ENCODE measurements at regions of chr9 and their contacts with region 1.

Region 1: DNA sequence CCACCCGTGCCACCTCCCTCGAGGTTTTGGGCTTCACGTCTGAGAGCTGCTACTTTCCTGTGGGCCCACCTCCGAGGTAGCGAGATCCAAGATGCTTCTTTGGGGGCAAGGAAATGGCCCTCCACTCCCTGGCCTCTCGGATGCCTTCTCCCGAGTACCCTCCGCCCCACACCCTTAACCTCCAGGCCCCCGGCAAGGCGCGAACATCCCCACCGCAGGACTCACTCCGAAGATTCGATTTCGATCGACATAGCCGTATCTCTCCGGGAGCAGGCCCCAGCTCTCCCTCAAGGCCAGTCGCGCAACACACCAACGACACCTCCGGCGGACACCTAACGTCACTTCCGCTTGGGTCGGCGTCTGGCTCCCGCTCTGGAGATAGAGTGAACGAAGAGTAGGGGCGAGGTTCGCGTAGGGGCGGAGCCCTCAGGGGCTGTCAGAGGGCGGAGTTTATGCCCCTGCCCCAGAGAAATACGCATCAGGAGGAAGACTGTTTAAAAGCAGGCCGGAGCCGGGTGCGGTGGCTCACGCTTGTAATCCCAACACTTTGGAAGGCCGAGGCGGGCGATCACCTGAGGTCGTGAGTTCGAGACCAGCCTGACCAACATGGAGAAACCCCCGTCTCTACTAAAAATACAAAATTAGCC is at the start of gene SMU1:
- DNase-seq: peak; percentile 94 to 98 (median 96)
- H3K4me3 ChIP-seq: peak within 1 kb of the TSS; percentile 79 to 92
- H3K4me3 Mint-ChIP-seq: peak within 1 kb of the TSS; percentile 94 to 100 (median 99)
- H3K27ac ChIP-seq: peak within 1 kb of the TSS; percentile 94
- H3K27ac Mint-ChIP-seq: peak within 1 kb of the TSS; percentile 99 to 100 (median 100)
- H3K4me1 ChIP-seq: peaks cover 47% of the 10 kb centered on the region
- H3K4me1 Mint-ChIP-seq: peaks cover 17 to 51% (median 34%) of the 10 kb centered on the region in 4 donors
- H3K27me3 ChIP-seq: no peaks in the 10 kb centered on the region
- H3K27me3 Mint-ChIP-seq: no peaks in the 10 kb centered on the region
- total RNA-seq, gene SMU1: 30.9 to 31.6 TPM

Region 2: DNA sequence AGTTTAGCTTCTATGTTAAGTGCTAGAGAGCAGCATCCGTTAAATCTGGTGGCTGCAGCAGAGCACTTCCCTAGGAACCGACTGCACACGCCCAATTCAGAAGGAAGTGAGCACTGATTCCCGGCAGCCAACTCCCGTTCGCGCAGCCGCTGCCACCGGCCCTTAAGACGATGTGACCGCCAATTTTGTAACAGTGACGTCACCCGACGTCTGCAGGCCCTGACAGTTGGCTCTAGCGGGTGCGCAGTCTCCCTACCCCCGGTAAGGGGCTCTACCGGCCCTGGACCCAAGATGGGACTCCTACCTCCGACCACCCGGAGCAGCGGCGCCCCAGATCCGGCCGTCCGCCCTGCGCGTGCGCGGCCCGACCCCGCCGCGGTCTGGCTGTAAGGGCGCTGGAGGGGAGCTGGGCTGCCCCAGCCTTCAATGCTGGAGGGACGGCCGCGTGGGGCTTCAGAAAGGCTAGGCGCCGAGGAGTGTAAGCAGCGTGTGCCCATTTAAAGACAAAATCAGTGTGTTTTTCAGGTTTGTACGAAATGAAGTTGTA is 32.3 kb before region 1 on chr9:
- CTCF ChIA-PET with region 1: no interaction called
- POLR2A ChIA-PET with region 1: no interaction called
- intact Hi-C with region 1: loop called (anchors 5 kb)
- DNase-seq: peak; percentile 58 to 83 (median 60)
- H3K4me3 ChIP-seq: peak overlapping the region; percentile 37 to 58
- H3K4me3 Mint-ChIP-seq: peak overlapping the region; percentile 75 to 89 (median 84)
- H3K27ac ChIP-seq: peak overlapping the region; percentile 58
- H3K27ac Mint-ChIP-seq: peak overlapping the region; percentile 54 to 92 (median 85)
- H3K4me1 ChIP-seq: peaks cover 8% of the 10 kb centered on the region
- H3K4me1 Mint-ChIP-seq: peaks cover 10 to 19% (median 13%) of the 10 kb centered on the region in 4 donors
- H3K27me3 ChIP-seq: no peaks in the 10 kb centered on the region
- H3K27me3 Mint-ChIP-seq: no peaks in the 10 kb centered on the region

Region 3: GRCh38 chr9:33178971-33179697 is 102.7 kb after region 1 on chr9:
- CTCF ChIA-PET with region 1: interaction called, 5 read pairs
- POLR2A ChIA-PET with region 1: interaction called, 3 read pairs
- intact Hi-C with region 1: loop called (anchors 1 kb)
- DNase-seq: no peak
- H3K4me3 ChIP-seq: no peak overlapping the region
- H3K4me3 Mint-ChIP-seq: no peak overlapping the region
- H3K27ac ChIP-seq: no peak overlapping the region
- H3K27ac Mint-ChIP-seq: no peak overlapping the region
- H3K4me1 ChIP-seq: no peaks in the 10 kb centered on the region
- H3K4me1 Mint-ChIP-seq: peaks cover 0 to 2% (median under 1%) of the 10 kb centered on the region in 4 donors
- H3K27me3 ChIP-seq: no peaks in the 10 kb centered on the region
- H3K27me3 Mint-ChIP-seq: peaks cover 4 to 6% of the 10 kb centered on the region in 2 donors

Region 4: DNA sequence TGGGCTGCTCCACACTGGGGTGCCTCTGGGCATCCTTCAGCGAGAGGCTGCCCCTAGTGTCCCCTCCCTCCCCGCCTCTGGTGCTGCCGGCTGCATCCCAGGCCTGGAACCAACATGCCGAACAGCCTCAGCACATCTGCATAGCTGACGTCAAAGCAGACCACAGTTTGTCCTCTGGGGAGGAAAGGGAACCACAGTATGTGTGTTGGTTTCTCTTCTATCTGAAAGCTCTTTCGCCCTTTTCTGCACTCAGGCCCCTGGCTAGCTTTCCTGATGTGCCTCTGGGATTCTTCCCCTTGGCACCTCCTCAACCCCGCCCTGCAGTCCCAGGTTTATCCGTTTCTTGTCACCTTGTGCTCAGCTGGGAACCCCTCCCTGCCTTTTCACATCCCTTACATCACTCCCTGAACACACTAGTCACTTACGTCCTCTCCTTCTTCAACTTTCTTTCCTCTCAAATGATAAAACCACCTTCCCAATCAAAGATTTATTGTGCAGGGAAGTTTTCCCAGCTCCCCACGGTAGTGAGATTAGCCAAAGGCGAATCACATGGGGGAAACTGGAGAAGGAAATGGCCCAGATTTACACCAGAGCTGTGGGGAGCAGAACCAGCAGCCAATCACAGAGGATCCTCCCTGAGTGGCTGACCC is 126.2 kb after region 1 on chr9:
- CTCF ChIA-PET with region 1: no interaction called
- POLR2A ChIA-PET with region 1: no interaction called
- intact Hi-C with region 1: no loop called
- DNase-seq: peak in 4 of 5 donors; percentile 27 to 58 (median 36)
- H3K4me3 ChIP-seq: no peak overlapping the region
- H3K4me3 Mint-ChIP-seq: peak overlapping the region in 3 of 8 donors; percentile 27 to 57 (median 27)
- H3K27ac ChIP-seq: no peak overlapping the region
- H3K27ac Mint-ChIP-seq: peak overlapping the region in 4 of 7 donors; percentile 39 to 75 (median 64)
- H3K4me1 ChIP-seq: no peaks in the 10 kb centered on the region
- H3K4me1 Mint-ChIP-seq: peaks cover 4 to 13% (median 5%) of the 10 kb centered on the region in 4 donors
- H3K27me3 ChIP-seq: no peaks in the 10 kb centered on the region
- H3K27me3 Mint-ChIP-seq: peaks cover 0 to 3% of the 10 kb centered on the region in 2 donors

Region 5: GRCh38 chr9:33225319-33226149 is 149.1 kb after region 1 on chr9:
- CTCF ChIA-PET with region 1: interaction called, 28 read pairs
- POLR2A ChIA-PET with region 1: interaction called, 4 read pairs
- intact Hi-C with region 1: loop called (anchors 1 kb)
- DNase-seq: peak; percentile 63 to 74 (median 69)
- H3K4me3 ChIP-seq: no peak overlapping the region
- H3K4me3 Mint-ChIP-seq: peak overlapping the region in 1 of 8 donors; percentile 16
- H3K27ac ChIP-seq: no peak overlapping the region
- H3K27ac Mint-ChIP-seq: no peak overlapping the region
- H3K4me1 ChIP-seq: peaks cover 9% of the 10 kb centered on the region
- H3K4me1 Mint-ChIP-seq: peaks cover 7 to 12% (median 8%) of the 10 kb centered on the region in 4 donors
- H3K27me3 ChIP-seq: no peaks in the 10 kb centered on the region
- H3K27me3 Mint-ChIP-seq: no peaks in the 10 kb centered on the region

Region 6: GRCh38 chr9:33264473-33265177 is 188.1 kb after region 1 on chr9 and contains the starts of genes BAG1 and CHMP5:
- CTCF ChIA-PET with region 1: no interaction called
- POLR2A ChIA-PET with region 1: interaction called, 9 read pairs
- intact Hi-C with region 1: loop called (anchors 1 kb)
- DNase-seq: peak; percentile 99 to 100 (median 100)
- H3K4me3 ChIP-seq: peak within 1 kb of the TSS; percentile 71 to 85
- H3K4me3 Mint-ChIP-seq: peak within 1 kb of the TSS; percentile 95 to 100 (median 97)
- H3K27ac ChIP-seq: peak within 1 kb of the TSS; percentile 76
- H3K27ac Mint-ChIP-seq: peak within 1 kb of the TSS; percentile 90 to 99 (median 98)
- H3K4me1 ChIP-seq: peaks cover 38% of the 10 kb centered on the region
- H3K4me1 Mint-ChIP-seq: peaks cover 38 to 53% (median 44%) of the 10 kb centered on the region in 4 donors
- H3K27me3 ChIP-seq: no peaks in the 10 kb centered on the region
- H3K27me3 Mint-ChIP-seq: no peaks in the 10 kb centered on the region
- total RNA-seq, gene BAG1: 53.5 to 56.3 TPM
- total RNA-seq, gene CHMP5: 32.3 to 35.0 TPM